ENCODE measurements at regions of chr3 and their contacts with region 1.

Region 1: GRCh38 chr3:151086484-151087456 is 1.3 kb downstream of the MED12L start:
- DNase-seq: peak; percentile 32 to 72 (median 50)
- ATAC-seq: peak; percentile 88
- H3K4me3 ChIP-seq: peak overlapping the region; percentile 58
- H3K4me3 Mint-ChIP-seq: peak overlapping the region; percentile 85 to 94 (median 90)
- H3K27ac ChIP-seq: no peak overlapping the region
- H3K27ac Mint-ChIP-seq: peak overlapping the region in 4 of 9 donors; percentile 20 to 73 (median 57)
- H3K4me1 ChIP-seq: peaks cover 0 to 6% of the 10 kb centered on the region in 2 donors
- H3K4me1 Mint-ChIP-seq: peaks cover 0 to 21% (median 11%) of the 10 kb centered on the region in 7 donors
- H3K27me3 ChIP-seq: peaks cover 0 to 10% of the 10 kb centered on the region in 2 donors
- H3K27me3 Mint-ChIP-seq: peaks cover 31 to 65% (median 58%) of the 10 kb centered on the region in 5 donors

Region 2: GRCh38 chr3:150703299-150704134 is 383.3 kb before region 1 on chr3 and contains the start of gene ERICH6:
- CTCF ChIA-PET with region 1: no interaction called
- POLR2A ChIA-PET with region 1: no interaction called
- intact Hi-C with region 1: loop called in 1 of 2 experiments (anchors 5 kb)
- DNase-seq: peak; percentile 59 to 83 (median 71)
- ATAC-seq: peak; percentile 93
- H3K4me3 ChIP-seq: peak within 1 kb of the TSS; percentile 94
- H3K4me3 Mint-ChIP-seq: peak within 1 kb of the TSS; percentile 82 to 98 (median 97)
- H3K27ac ChIP-seq: peak within 1 kb of the TSS; percentile 84
- H3K27ac Mint-ChIP-seq: peak within 1 kb of the TSS; percentile 93 to 100 (median 97)
- H3K4me1 ChIP-seq: peaks cover 4 to 5% of the 10 kb centered on the region in 2 donors
- H3K4me1 Mint-ChIP-seq: peaks cover 11 to 24% (median 20%) of the 10 kb centered on the region in 7 donors
- H3K27me3 ChIP-seq: no peaks in the 10 kb centered on the region
- H3K27me3 Mint-ChIP-seq: peaks cover 0 to 6% (median 0%) of the 10 kb centered on the region in 5 donors
- total RNA-seq, gene ERICH6: 0.24 to 1.4 (median 0.53) TPM

Region 3: GRCh38 chr3:150906461-150906860 is 180.3 kb before region 1 on chr3:
- CTCF ChIA-PET with region 1: no interaction called
- POLR2A ChIA-PET with region 1: no interaction called
- intact Hi-C with region 1: no loop called
- DNase-seq: no peak
- ATAC-seq: no peak
- H3K4me3 ChIP-seq: no peak overlapping the region
- H3K4me3 Mint-ChIP-seq: no peak overlapping the region
- H3K27ac ChIP-seq: no peak overlapping the region
- H3K27ac Mint-ChIP-seq: no peak overlapping the region
- H3K4me1 ChIP-seq: no peaks in the 10 kb centered on the region
- H3K4me1 Mint-ChIP-seq: no peaks in the 10 kb centered on the region
- H3K27me3 ChIP-seq: no peaks in the 10 kb centered on the region
- H3K27me3 Mint-ChIP-seq: peaks cover 10 to 49% (median 32%) of the 10 kb centered on the region in 5 donors

Region 4: DNA sequence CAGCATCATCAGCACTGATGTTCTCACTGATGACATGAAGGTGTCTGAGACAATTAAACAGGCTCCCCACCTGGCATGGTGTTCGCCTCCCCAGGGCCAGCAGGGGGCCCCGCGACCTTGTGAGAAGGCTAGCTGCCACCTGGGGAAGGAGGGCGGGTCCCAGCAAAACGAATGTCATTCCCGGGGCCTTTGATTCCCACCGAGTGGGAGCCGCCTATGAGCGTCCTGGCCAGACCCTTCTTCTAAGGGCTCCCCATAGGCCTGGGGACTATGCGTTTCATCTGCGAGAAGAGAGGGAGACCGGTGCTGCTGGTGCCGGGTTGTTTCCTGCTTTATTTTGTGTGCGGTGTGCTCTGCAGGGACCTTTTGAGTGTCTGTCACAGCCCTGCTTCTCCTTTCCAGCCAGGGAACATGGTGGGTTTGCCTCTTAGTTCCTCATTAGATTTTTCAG is 161.0 kb before region 1 on chr3:
- CTCF ChIA-PET with region 1: interaction called, 3 read pairs
- POLR2A ChIA-PET with region 1: no interaction called
- intact Hi-C with region 1: loop called (anchors 2 to 5 kb)
- DNase-seq: peak; percentile 11 to 52 (median 29)
- ATAC-seq: peak; percentile 72
- H3K4me3 ChIP-seq: no peak overlapping the region
- H3K4me3 Mint-ChIP-seq: peak overlapping the region in 9 of 10 donors; percentile 29 to 77 (median 57)
- H3K27ac ChIP-seq: no peak overlapping the region
- H3K27ac Mint-ChIP-seq: peak overlapping the region in 1 of 9 donors; percentile 41
- H3K4me1 ChIP-seq: no peaks in the 10 kb centered on the region
- H3K4me1 Mint-ChIP-seq: peaks cover 0 to 9% (median 7%) of the 10 kb centered on the region in 7 donors
- H3K27me3 ChIP-seq: no peaks in the 10 kb centered on the region
- H3K27me3 Mint-ChIP-seq: peaks cover 14 to 33% (median 17%) of the 10 kb centered on the region in 5 donors

Measured in naive thymus-derived CD4-positive, alpha-beta T cell (primary cell).